ENCODE measurements at regions of chr2 and their contacts with region 1.

Region 1: GRCh38 chr2:161063157-161063954 is 96.9 kb upstream of the TANK start:
- DNase-seq: peak; percentile 83 to 88
- H3K4me3 ChIP-seq: no peak overlapping the region
- H3K4me3 Mint-ChIP-seq: peak overlapping the region; percentile 13
- H3K27ac Mint-ChIP-seq: no peak overlapping the region
- H3K4me1 ChIP-seq: 0 out of 2 replicates have a peak, but pooled peaks cover 4% of the 10 kb centered on the region
- H3K4me1 Mint-ChIP-seq: peaks cover 6% of the 10 kb centered on the region
- H3K27me3 ChIP-seq: no peaks in the 10 kb centered on the region; the same call in 1 of the 2 replicates
- H3K27me3 Mint-ChIP-seq: no peaks in the 10 kb centered on the region
- CTCF ChIP-seq: peak; percentile 92 to 93

Region 2: GRCh38 chr2:161004379-161004778 is 59.0 kb before region 1 on chr2:
- CTCF ChIA-PET with region 1: interaction called, 5 read pairs
- POLR2A ChIA-PET with region 1: no interaction called
- intact Hi-C with region 1: loop called (anchors 1 kb)
- DNase-seq: no peak
- H3K4me3 ChIP-seq: no peak overlapping the region
- H3K4me3 Mint-ChIP-seq: no peak overlapping the region
- H3K27ac Mint-ChIP-seq: no peak overlapping the region
- H3K4me1 ChIP-seq: no peaks in the 10 kb centered on the region
- H3K4me1 Mint-ChIP-seq: no peaks in the 10 kb centered on the region
- H3K27me3 ChIP-seq: no peaks in the 10 kb centered on the region
- H3K27me3 Mint-ChIP-seq: no peaks in the 10 kb centered on the region
- CTCF ChIP-seq: peak; percentile 20 to 37

Region 3: DNA sequence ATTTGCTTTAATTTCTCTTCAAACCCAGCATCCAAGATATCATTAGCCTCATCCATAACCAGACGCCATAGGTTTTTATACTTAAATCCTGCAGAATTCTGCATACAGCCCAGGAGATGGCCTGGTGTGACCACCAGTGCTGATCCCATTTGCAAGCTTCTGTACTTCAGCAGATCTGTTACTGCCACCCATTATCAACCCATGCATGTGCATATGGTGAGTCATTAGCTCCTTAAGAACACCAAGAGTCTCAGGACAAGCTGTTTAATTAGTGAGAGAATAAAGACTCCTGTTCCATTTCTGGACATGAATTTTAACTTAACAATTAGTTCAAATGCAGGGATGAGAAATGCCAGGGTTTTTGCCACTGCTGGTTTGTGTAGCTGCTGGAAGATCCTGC is 13.8 kb before region 1 on chr2:
- CTCF ChIA-PET with region 1: interaction called, 5 read pairs
- POLR2A ChIA-PET with region 1: no interaction called
- intact Hi-C with region 1: loop called (anchors 1 kb)
- DNase-seq: no peak
- H3K4me3 ChIP-seq: no peak overlapping the region
- H3K4me3 Mint-ChIP-seq: no peak overlapping the region
- H3K27ac Mint-ChIP-seq: no peak overlapping the region
- H3K4me1 ChIP-seq: peaks cover 15% of the 10 kb centered on the region
- H3K4me1 Mint-ChIP-seq: peaks cover 22% of the 10 kb centered on the region
- H3K27me3 ChIP-seq: no peaks in the 10 kb centered on the region
- H3K27me3 Mint-ChIP-seq: peaks cover 2% of the 10 kb centered on the region
- CTCF ChIP-seq: no peak

Region 4: GRCh38 chr2:161147856-161148569 is 84.7 kb after region 1 on chr2:
- CTCF ChIA-PET with region 1: no interaction called
- POLR2A ChIA-PET with region 1: no interaction called
- intact Hi-C with region 1: no loop called
- DNase-seq: no peak
- H3K4me3 ChIP-seq: no peak overlapping the region
- H3K4me3 Mint-ChIP-seq: no peak overlapping the region
- H3K27ac Mint-ChIP-seq: no peak overlapping the region
- H3K4me1 ChIP-seq: no peaks in the 10 kb centered on the region
- H3K4me1 Mint-ChIP-seq: no peaks in the 10 kb centered on the region
- H3K27me3 ChIP-seq: no peaks in the 10 kb centered on the region
- H3K27me3 Mint-ChIP-seq: no peaks in the 10 kb centered on the region
- CTCF ChIP-seq: no peak

Measured in Caco-2 (cell line).